ENCODE measurements at regions of chr17 and their contacts with region 1.

Region 1: DNA sequence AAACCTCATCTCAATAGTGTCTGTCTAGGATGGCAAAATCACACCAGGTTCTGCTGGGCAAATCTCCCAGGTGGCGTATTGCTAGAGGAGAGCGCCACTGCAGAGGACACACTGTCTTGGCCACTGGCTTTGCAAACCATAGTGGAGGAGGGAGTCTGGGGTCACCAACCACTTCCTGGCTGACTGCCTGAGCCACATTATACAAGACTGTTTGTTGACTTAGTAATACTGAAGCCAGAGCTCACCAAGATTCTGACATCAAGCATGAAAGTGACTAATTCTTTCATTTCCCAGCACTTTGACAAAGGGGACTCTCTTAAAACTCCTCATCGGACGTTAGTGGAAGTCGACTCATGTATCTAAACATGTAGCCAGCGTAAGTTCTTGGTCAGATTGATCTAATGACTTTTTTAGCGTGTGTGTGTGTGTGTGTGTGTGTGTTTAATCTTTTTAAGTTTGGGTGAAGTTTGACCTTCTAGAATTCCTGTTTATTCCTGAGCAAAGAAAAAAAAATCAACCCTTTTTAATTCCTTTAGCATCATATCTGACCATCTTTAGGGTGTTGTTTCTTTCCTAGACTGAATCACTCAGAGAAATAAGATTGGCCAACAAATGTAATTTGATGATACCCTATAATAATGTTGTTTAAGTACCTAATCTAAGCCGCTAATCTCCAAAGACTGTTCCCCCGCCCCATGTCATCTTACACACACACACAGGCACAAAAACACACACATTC is 13.7 kb downstream of the PITPNC1 start:
- DNase-seq: peak; percentile 78
- ATAC-seq: peak; percentile 85 to 90

Region 2: GRCh38 chr17:67208232-67208631 is 182.6 kb before region 1 on chr17:
- intact Hi-C with region 1: no loop called
- DNase-seq: no peak
- ATAC-seq: no peak

Region 3: GRCh38 chr17:67441052-67441927 is 50.5 kb after region 1 on chr17:
- intact Hi-C with region 1: loop called in 1 of 2 experiments (anchors 5 kb)
- DNase-seq: peak; percentile 53
- ATAC-seq: peak; percentile 79 to 89